Sigmoid colon (tissue), 7 donors: ENCODE measurements at regions of chr2 and their contacts with region 1.

Region 1: GRCh38 chr2:127901339-127902056 is 15.7 kb upstream of the AMMECR1L start:
- DNase-seq: peak; percentile 92
- H3K4me3 ChIP-seq: no peak overlapping the region
- H3K27ac ChIP-seq: peak overlapping the region; percentile 42 to 84 (median 78)
- H3K4me1 ChIP-seq: peaks cover 0 to 17% (median 10%) of the 10 kb centered on the region in 4 donors
- H3K27me3 ChIP-seq: no peaks in the 10 kb centered on the region
- CTCF ChIP-seq: no peak
- EP300 ChIP-seq: peak in 1 of 4 donors; percentile 4
- POLR2A ChIP-seq: no peak

Region 2: DNA sequence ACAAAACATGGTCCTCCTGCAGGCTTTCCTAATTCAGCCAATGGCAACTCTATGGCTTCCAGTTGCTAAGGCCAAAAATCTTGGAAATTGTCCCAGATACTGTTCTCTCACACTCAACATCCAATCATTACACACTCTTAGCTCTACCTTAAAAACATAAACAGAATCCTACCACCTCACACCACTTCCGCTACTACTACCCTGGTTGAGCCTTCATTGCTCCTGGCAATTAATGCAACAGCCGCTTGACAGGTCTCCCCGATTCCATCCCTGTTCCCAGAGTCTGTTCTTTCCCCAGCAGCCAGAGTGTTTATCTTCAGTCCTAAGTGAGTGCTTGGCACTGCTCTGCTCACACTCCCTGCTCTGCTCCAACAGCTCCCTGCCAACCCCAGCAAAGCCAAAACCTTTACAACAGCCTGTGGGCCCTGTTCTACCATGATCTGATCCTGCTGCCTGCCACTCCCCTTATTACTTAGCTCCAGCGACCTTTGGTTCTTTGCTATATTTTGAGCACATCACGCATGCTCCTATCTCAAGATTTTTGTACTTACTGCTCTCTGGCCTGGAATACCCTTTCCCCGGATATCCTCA is 51.7 kb after region 1 on chr2:
- intact Hi-C with region 1: loop called (anchors 5 kb)
- DNase-seq: peak; percentile 83
- H3K4me3 ChIP-seq: no peak overlapping the region
- H3K27ac ChIP-seq: peak overlapping the region; percentile 60 to 75 (median 72)
- H3K4me1 ChIP-seq: peaks cover 4 to 32% (median 20%) of the 10 kb centered on the region in 4 donors
- H3K27me3 ChIP-seq: no peaks in the 10 kb centered on the region
- CTCF ChIP-seq: no peak
- EP300 ChIP-seq: no peak
- POLR2A ChIP-seq: no peak